Activated naive CD4-positive, alpha-beta T cell treated with anti-CD3 and anti-CD28 coated beads, Interleukin-2, amount 10 ng/mL, durations not matched to agents 7 days and 5 days (primary cell): ENCODE measurements at regions of chr11 and their contacts with region 1.

Region 1: DNA sequence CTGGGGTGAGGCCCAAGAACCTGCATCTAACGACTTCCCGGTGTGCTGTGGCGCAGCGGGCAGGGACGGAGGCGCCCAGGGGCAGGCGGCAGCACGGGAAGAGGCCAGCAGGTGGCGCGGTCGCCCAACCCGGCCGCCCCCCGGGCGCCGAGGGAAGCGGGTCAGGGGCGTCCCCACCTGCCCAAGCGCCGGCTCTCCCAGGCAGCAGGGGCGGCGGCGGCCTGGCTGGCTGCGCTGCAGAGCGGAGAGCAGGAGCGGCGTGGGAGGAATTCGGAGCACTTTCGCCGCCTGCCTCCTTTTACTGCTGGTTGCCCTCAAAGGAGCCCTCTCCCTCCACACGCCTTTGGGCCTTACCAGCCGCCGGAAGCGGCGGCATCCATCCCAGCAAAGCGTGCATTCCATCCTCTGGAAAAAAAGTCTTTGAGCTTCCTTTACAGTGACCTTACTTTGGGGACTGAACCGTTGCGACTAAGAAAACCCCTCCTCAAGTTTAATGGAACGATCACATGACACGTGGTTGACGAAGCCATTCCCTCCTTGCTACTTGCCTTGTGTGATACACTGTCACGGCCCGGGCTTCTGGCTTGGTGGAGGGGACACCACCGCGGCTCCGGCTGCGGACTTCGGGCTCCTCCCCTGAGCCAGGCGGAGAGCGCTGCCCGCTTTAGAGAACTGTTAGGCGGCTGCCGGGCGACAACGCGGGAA is 106.8 kb upstream of the CLMP start:
- DNase-seq: peak; percentile 78
- H3K4me3 Mint-ChIP-seq: peak overlapping the region; percentile 54
- H3K27ac Mint-ChIP-seq: no peak overlapping the region
- H3K4me1 Mint-ChIP-seq: peaks cover 46% of the 10 kb centered on the region
- H3K27me3 Mint-ChIP-seq: no peaks in the 10 kb centered on the region

Region 2: DNA sequence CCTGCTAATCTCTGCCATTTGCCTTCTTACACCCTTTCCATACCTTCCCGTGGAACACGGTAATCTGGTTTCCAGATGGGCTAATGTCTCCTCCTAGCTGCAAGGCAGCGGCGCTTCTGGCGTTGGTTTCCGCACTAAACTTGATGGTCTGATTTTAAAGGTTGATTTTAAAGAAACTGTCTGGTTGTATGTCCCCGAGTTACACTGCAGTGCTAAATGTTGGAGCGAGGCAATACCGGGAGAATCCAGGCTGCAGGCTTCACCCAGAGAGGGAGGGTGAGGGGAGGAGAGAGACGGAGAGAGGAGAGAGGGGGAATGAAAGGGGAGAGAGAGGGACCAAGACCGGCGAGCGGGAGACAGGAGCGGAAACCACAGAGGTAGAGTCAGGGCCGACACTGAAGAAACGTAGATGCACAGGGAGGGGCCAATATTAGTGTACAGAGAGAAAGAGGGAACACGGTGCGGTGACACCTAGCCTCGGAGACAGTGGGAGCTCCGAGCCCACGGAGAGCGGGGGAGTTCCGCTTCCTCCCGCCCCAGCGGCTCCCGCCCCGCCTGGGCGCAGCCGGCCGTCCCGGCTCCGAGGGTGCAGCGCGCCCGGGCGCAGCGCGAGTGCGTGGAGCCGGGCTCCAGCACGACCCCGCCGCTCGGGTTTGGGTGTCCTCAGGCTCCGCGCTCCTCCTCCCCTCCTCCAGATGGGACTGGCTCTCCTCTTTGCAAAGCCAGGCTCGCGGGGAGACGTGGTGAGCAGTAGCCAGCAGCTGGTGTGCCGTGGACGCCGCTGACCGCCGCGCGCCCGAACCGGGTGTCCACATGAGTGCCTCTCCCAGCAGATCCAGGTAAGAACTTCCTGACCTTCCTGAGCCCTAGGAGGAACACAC is 56.4 kb after region 1 on chr11:
- CTCF ChIA-PET with region 1: interaction called, 25 read pairs
- DNase-seq: peak; percentile 66
- H3K4me3 Mint-ChIP-seq: peak overlapping the region; percentile 81
- H3K27ac Mint-ChIP-seq: peak overlapping the region; percentile 78
- H3K4me1 Mint-ChIP-seq: peaks cover 51% of the 10 kb centered on the region
- H3K27me3 Mint-ChIP-seq: peaks cover 42% of the 10 kb centered on the region

Region 3: GRCh38 chr11:123429913-123430720 is 128.3 kb after region 1 on chr11 and contains the start of gene GRAMD1B:
- CTCF ChIA-PET with region 1: interaction called, 26 read pairs
- DNase-seq: peak; percentile 93
- H3K4me3 Mint-ChIP-seq: peak within 1 kb of the TSS; percentile 86
- H3K27ac Mint-ChIP-seq: peak within 1 kb of the TSS; percentile 93
- H3K4me1 Mint-ChIP-seq: peaks cover 50% of the 10 kb centered on the region
- H3K27me3 Mint-ChIP-seq: no peaks in the 10 kb centered on the region

Region 4: DNA sequence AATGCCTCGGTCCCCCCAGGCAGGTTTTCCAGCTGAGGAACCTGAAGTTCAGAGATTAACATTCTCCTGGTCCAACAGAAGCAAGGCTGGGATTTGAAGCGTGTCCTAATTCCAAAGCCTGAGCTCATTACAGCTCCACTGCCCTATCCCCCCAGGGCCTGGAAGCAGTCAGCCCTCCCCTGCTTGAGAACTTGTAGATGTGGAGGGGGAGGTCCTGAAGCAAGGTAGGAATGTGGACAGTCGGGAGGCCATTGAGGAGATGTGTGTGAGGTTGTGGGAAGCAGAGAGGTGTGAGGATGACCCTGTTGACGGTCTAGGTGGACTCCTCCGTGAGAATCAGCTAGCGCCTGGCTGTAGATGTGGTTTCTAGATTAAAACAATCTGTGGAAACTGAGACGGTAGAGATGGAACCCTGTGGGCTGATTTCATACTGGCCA is 136.4 kb after region 1 on chr11:
- CTCF ChIA-PET with region 1: interaction called, 26 read pairs
- DNase-seq: no peak
- H3K4me3 Mint-ChIP-seq: no peak overlapping the region
- H3K27ac Mint-ChIP-seq: peak overlapping the region; percentile 62
- H3K4me1 Mint-ChIP-seq: peaks cover 86% of the 10 kb centered on the region
- H3K27me3 Mint-ChIP-seq: no peaks in the 10 kb centered on the region

Region 5: DNA sequence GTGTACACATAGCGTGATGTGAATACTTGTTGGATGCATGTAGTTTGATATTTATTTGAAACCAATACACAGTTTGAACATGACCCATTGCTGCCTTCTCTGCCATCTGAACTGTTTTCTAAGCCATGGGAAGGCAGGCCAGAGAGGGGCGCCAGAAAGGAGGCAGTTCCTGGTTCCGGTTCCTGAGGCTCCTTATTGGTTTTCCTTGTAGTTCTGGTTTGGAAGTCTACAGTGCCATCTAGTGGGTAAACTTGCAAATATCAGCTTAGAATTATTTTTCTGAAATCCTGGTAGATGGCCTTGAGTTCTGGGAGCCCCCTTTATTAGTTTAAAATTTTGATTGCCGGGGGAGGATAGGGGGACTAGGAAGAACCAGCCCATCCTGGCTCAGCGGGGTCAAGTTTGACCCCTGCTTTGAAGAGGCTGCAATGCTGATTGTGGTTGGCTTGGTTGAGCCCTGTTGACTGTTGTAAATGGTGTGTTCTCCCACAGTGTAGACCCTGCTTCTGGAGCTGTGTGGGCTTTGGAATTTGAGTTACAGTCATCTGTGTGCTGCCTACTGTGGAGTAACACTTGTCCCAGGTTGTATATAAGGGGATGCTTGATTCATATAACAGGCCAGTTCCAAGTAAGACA is 176.6 kb after region 1 on chr11:
- CTCF ChIA-PET with region 1: interaction called, 14 read pairs
- DNase-seq: peak; percentile 53
- H3K4me3 Mint-ChIP-seq: no peak overlapping the region
- H3K27ac Mint-ChIP-seq: no peak overlapping the region
- H3K4me1 Mint-ChIP-seq: peaks cover 32% of the 10 kb centered on the region
- H3K27me3 Mint-ChIP-seq: no peaks in the 10 kb centered on the region